ENCODE measurements at regions of chr2 and their contacts with region 1.

Region 1: GRCh38 chr2:37549598-37549997 is 121.8 kb downstream of the CDC42EP3 start:
- DNase-seq: no peak
- ATAC-seq: no peak
- H3K4me3 ChIP-seq: no peak overlapping the region
- H3K27ac ChIP-seq: no peak overlapping the region
- H3K4me1 ChIP-seq: no peaks in the 10 kb centered on the region
- H3K27me3 ChIP-seq: 0 out of 2 replicates have a peak, but pooled peaks cover 1% of the 10 kb centered on the region
- CTCF ChIP-seq: no peak
- POLR2A ChIP-seq: no peak
- RAD21 ChIP-seq: no peak

Region 2: GRCh38 chr2:37526321-37526720 is 23.3 kb before region 1 on chr2:
- CTCF ChIA-PET with region 1: no interaction called
- POLR2A ChIA-PET with region 1: no interaction called
- dilution Hi-C with region 1: no loop called
- in situ Hi-C with region 1: no loop called
- intact Hi-C with region 1: no loop called
- DNase-seq: peak; percentile 8
- ATAC-seq: no peak
- H3K4me3 ChIP-seq: no peak overlapping the region
- H3K27ac ChIP-seq: no peak overlapping the region
- H3K4me1 ChIP-seq: peaks cover 12% of the 10 kb centered on the region
- H3K27me3 ChIP-seq: no peaks in the 10 kb centered on the region
- CTCF ChIP-seq: no peak
- POLR2A ChIP-seq: no peak
- RAD21 ChIP-seq: no peak

Region 3: GRCh38 chr2:37600735-37601134 is 51.1 kb after region 1 on chr2:
- CTCF ChIA-PET with region 1: no interaction called
- POLR2A ChIA-PET with region 1: no interaction called
- dilution Hi-C with region 1: no loop called
- in situ Hi-C with region 1: no loop called
- intact Hi-C with region 1: loop called (anchors 2 kb)
- DNase-seq: no peak
- ATAC-seq: no peak
- H3K4me3 ChIP-seq: no peak overlapping the region
- H3K27ac ChIP-seq: no peak overlapping the region
- H3K4me1 ChIP-seq: peaks cover 9% of the 10 kb centered on the region
- H3K27me3 ChIP-seq: no peaks in the 10 kb centered on the region
- CTCF ChIP-seq: no peak
- POLR2A ChIP-seq: no peak
- RAD21 ChIP-seq: no peak